Activated CD8-positive, alpha-beta memory T cell treated with anti-CD3 and anti-CD28 coated beads, Interleukin-2, amount 10 ng/mL, durations not matched to agents 7 days and 5 days (primary cell): ENCODE measurements at regions of chr12 and their contacts with region 1.

Region 1: GRCh38 chr12:63843721-63844390 is 644 bp upstream of the SRGAP1 start:
- DNase-seq: peak; percentile 86
- ATAC-seq: peak; percentile 98
- H3K4me3 Mint-ChIP-seq: peak overlapping the region; percentile 66
- H3K27ac Mint-ChIP-seq: no peak overlapping the region
- H3K4me1 Mint-ChIP-seq: peaks cover 13% of the 10 kb centered on the region
- H3K27me3 Mint-ChIP-seq: peaks cover 30% of the 10 kb centered on the region

Region 2: DNA sequence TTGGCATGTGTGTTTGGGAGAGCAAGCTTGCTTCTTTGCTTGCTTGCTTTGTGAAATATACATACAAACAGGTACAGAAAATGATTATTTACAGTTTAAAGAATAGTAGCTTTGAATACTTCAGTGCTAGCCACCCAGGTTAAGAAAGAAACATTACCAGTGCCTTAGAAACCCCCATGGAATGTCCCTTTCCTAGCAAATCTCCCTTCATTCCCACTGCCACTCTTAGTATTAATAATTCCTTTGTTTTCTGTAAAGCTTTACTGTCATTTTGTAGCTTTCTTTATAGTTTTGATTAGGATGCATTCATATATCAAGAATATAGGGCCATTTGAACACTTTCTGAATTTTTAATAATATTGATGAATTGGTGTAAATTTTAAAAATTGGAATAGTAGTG is 10.1 kb after region 1 on chr12:
- CTCF ChIA-PET with region 1: interaction called, 18 read pairs
- DNase-seq: no peak
- ATAC-seq: no peak
- H3K4me3 Mint-ChIP-seq: no peak overlapping the region
- H3K27ac Mint-ChIP-seq: no peak overlapping the region
- H3K4me1 Mint-ChIP-seq: no peaks in the 10 kb centered on the region
- H3K27me3 Mint-ChIP-seq: no peaks in the 10 kb centered on the region